ENCODE measurements at regions of chr16 and their contacts with region 1.

Region 1: GRCh38 chr16:57994778-57995177 is 5.7 kb downstream of the ZNF319 start:
- DNase-seq: peak; percentile 57 to 72 (median 60)
- ATAC-seq: peak; percentile 46 to 70 (median 58)
- H3K4me3 ChIP-seq: no peak overlapping the region
- H3K27ac ChIP-seq: no peak overlapping the region
- H3K4me1 ChIP-seq: peaks cover 0 to 7% (median 0%) of the 10 kb centered on the region in 4 donors
- H3K27me3 ChIP-seq: no peaks in the 10 kb centered on the region
- CTCF ChIP-seq: peak in 3 of 4 donors; percentile 23 to 35 (median 27)
- POLR2A ChIP-seq: no peak

Region 2: DNA sequence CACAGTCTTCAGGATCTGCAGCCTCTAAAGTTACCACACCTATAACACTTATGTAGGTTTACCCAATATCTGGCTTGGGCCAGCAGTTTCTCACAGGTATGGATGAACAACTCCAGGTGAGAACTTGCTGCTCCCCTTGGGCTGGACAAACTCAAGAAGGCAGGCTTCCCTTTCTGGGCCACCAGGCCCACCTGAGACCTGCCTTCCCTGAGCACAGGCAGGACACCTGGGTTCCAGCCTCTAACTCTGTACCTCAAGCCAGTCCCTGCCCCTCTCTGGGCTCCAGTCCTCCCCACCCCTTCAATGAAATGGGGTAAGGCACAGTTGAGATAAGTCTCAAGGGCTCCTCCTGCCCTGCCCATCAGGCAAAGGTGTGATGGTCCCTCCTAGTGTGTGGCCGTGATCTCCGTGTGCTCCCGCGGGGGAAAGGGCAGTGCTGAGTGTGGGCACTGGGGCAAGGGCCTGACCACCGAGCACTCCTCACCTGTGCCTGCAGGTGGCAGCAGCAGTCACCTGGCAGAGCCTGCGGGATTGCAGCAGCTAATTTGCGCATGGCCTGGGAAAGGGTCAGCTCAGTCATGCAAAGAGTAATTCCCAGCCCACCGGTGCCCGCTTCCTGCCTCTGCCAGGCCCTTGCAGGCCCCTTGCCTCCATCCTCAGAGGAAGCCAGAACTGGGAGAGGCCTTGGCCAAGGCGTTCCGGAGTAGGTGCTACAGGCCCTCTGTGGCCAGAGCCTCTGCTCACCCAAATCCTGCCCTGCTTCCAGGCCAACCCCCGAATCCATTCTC is 394.5 kb before region 1 on chr16:
- intact Hi-C with region 1: no loop called
- DNase-seq: peak; percentile 61 to 71 (median 70)
- ATAC-seq: peak; percentile 94 to 95 (median 95)
- H3K4me3 ChIP-seq: no peak overlapping the region
- H3K27ac ChIP-seq: no peak overlapping the region
- H3K4me1 ChIP-seq: no peaks in the 10 kb centered on the region
- H3K27me3 ChIP-seq: no peaks in the 10 kb centered on the region
- CTCF ChIP-seq: peak; percentile 71 to 83 (median 80)
- POLR2A ChIP-seq: no peak

Region 3: DNA sequence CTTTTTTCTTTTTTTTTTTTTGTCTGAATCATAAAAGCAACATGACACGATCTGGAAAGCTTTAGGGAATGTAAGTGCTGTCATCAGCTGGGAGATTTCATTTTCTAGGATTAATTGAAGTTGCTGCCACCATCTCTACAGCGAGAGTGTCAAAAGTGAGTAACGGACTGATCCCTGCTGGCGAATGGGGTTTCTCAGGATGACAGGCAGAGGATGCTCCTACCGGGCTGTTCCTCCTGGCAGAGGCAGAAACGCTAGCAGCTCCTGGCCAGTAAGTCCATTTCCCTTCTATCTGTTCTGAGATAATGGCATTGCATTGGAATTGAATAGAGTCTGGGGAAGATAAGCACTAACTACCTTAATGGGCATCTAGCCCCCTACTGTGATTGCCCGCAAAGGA is 112.0 kb before region 1 on chr16:
- intact Hi-C with region 1: no loop called
- DNase-seq: no peak
- ATAC-seq: no peak
- H3K4me3 ChIP-seq: no peak overlapping the region
- H3K27ac ChIP-seq: no peak overlapping the region
- H3K4me1 ChIP-seq: no peaks in the 10 kb centered on the region
- H3K27me3 ChIP-seq: no peaks in the 10 kb centered on the region
- CTCF ChIP-seq: no peak
- POLR2A ChIP-seq: no peak

Region 4: DNA sequence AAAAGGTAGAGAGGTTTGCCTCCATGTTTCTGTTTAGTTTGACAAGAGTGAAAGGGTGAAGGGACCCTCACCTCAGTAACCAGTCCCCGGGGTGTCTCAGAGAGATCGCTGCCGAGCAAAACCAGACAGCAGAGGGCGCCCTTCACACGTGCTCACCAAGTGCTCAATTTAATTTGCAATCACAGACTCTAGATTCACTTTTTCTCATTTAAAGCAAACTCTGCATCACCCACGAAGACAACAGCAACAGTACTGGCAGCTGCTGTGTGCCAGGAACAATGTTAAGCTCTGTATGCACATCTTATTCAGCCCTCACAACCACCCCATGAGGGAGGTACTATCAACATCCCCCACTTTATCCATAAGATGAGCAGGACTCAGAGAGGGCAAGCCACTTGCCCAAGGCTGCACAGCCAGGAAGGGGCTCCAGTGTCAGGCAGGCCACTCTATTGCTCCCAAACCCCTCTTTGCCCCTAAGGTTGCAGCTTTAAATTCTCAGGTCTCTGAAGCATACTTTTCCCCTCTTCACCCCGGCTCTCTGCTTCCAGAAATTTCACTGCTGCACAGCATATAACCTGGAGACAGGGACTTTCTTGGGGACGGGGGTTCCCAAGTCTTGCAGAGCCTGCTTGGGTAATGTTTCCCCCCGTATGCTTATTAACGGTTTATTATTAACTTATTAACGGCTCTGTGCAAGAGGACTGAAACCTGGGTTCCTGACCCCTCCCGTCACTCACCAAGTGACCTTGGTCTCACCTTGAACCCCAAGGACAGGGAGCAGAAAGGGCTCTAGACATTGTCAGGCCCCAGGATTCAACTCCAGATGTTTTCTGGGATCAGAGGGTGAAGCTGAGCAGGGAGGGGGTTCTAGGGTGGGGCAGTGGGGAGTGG is 94.8 kb before region 1 on chr16:
- intact Hi-C with region 1: loop called (anchors 5 kb)
- DNase-seq: peak; percentile 72 to 78 (median 75)
- ATAC-seq: peak; percentile 76 to 84 (median 78)
- H3K4me3 ChIP-seq: no peak overlapping the region
- H3K27ac ChIP-seq: no peak overlapping the region
- H3K4me1 ChIP-seq: peaks cover 0 to 17% (median 10%) of the 10 kb centered on the region in 4 donors
- H3K27me3 ChIP-seq: no peaks in the 10 kb centered on the region
- CTCF ChIP-seq: peak; percentile 79 to 96 (median 87)
- POLR2A ChIP-seq: no peak

Region 5: GRCh38 chr16:57906382-57907316 is 88.1 kb before region 1 on chr16:
- intact Hi-C with region 1: loop called (anchors 5 kb)
- DNase-seq: no peak
- ATAC-seq: peak; percentile 39 to 43 (median 42)
- H3K4me3 ChIP-seq: no peak overlapping the region
- H3K27ac ChIP-seq: no peak overlapping the region
- H3K4me1 ChIP-seq: no peaks in the 10 kb centered on the region
- H3K27me3 ChIP-seq: no peaks in the 10 kb centered on the region
- CTCF ChIP-seq: peak; percentile 17 to 38 (median 34)
- POLR2A ChIP-seq: no peak